ENCODE measurements at regions of chr1 and their contacts with region 1.

Region 1: DNA sequence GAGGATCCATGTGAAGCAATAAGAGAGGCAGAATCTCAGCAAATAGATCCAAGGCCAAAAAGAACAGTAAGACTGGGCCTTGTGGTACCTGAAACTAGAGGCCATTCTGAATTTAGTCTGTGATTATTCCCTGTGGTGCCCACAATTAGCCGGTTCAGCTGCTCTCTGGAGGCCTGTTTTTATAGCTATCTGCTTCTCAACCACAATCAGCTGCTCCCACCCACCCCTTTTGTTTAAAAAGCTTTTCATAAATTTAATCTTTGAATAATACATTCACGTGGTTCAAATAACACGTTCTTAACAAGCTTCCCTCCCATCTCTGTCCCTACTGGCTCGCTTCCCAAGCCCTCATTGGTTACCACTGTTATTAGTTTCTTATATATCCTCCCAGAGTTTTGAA is 18.0 kb downstream of the UBE2T start:
- DNase-seq: no peak
- H3K4me3 ChIP-seq: no peak overlapping the region
- H3K27ac ChIP-seq: no peak overlapping the region
- H3K4me1 ChIP-seq: no peaks in the 10 kb centered on the region
- H3K27me3 ChIP-seq: no peaks in the 10 kb centered on the region
- CTCF ChIP-seq: no peak

Region 2: DNA sequence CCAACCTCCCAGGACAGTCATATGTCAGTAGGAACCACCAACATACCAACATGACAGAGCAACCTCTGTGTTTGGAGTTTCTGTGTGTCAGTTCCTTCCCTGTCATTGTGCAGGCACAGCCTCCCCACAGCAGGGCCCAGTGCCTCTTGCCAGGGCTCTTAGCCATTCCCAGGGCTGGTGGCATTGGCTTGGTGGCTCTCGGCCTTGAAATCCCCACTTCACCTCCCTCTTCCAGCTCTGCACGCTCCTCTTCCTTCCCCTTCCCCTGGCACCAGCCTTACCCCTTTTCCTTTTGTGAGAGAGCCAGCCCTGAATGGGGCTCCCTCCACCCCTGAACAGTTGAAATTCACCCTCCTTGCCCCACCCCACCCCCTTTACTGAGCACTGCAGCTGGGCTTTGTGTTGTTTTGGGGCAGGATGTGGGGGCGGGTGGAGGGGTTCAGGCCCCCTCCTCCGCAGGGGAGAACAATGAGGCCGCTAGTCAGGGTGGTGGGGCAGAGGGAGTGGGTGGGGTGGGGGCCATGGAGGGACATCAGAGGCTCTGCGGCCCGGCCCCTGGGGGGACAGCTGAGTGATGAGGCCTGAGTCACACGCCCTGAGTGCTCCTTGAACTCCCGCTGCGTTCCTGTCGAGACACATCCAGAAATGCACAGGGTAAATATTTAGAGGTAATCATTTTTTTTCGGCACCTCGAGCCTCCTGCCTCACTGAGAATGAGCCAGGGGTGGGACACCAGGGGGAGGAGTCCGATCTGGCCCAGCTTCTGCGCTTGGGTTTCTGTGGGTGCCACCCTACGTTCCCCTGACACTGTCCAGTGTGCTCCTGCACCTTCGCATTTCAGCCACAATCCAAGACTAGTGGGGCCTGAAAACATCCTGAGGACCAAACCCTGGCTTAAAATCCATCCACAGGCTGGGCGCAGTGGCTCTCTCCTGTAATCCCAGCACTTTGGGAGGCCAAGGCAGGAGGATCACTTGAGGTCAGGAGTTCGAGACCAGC is 101.5 kb before region 1 on chr1:
- CTCF ChIA-PET with region 1: interaction called, 10 read pairs
- POLR2A ChIA-PET with region 1: interaction called, 4 read pairs
- intact Hi-C with region 1: no loop called
- DNase-seq: peak; percentile 73 to 74
- H3K4me3 ChIP-seq: 0 out of 2 replicates have a peak overlapping the region, but pooled peaks have one; percentile 15
- H3K27ac ChIP-seq: no peak overlapping the region
- H3K4me1 ChIP-seq: peaks cover 21% of the 10 kb centered on the region
- H3K27me3 ChIP-seq: peaks cover 16% of the 10 kb centered on the region; the same call in 1 of the 2 replicates
- CTCF ChIP-seq: no peak

Region 3: GRCh38 chr1:202376247-202376646 is 52.5 kb after region 1 on chr1:
- CTCF ChIA-PET with region 1: no interaction called
- POLR2A ChIA-PET with region 1: no interaction called
- intact Hi-C with region 1: no loop called
- DNase-seq: no peak
- H3K4me3 ChIP-seq: no peak overlapping the region
- H3K27ac ChIP-seq: peak overlapping the region; percentile 30; the same call in 1 of the 2 replicates
- H3K4me1 ChIP-seq: peaks cover 44% of the 10 kb centered on the region
- H3K27me3 ChIP-seq: no peaks in the 10 kb centered on the region
- CTCF ChIP-seq: no peak